Dorsolateral prefrontal cortex (tissue), 120 donors: ENCODE measurements at regions of chr14 and their contacts with region 1.

Region 1: DNA sequence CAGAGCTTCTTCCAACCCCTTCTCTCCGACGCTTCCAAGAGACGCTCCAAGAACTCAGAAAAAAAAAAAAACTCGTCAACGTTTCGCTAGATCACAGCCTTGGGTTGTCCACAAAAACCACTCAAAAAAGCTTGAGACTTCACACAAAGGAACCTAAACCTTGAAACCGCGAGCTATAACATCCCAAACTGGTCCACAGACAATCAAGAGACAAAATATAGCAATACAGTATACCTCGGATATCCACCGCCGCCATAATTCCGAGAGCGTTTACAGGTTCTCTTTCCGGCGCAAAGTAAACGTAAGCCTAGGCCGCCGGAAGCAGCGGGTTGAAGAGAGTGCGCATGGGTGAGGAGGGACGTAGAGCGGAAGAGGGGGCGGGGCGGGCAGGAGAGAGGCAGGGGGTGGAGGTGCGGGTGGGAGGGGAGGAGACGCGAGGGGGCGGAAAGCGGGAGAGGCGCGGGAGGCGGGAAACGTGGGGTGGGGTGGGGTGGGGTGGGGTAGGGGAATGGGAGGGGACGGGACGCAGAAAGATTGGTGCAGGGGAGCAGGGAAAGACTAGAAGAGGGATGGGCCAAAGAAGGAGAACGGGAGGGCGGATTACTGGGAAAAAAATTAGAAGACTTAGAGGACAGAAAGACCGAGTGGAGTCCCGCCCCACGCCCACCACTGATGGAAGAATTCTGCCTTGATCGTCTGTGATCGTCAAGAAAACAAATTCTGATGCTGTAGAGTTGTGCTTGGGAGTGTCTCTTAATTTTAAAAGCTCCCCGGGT is at the start of gene MED6:
- DNase-seq: peak; percentile 85 to 93 (median 88)
- H3K4me3 ChIP-seq: peak within 1 kb of the TSS; percentile 60 to 100 (median 93)
- H3K27ac ChIP-seq: peak within 1 kb of the TSS in 27 of 59 donors; percentile 25 to 79 (median 48)
- H3K27me3 ChIP-seq: peaks cover 0 to 17% (median 0%) of the 10 kb centered on the region in 45 donors
- CTCF ChIP-seq: peak in 1 of 56 donors; percentile 8
- total RNA-seq, gene MED6: 41.4 to 79.3 (median 65.8) TPM

Region 2: DNA sequence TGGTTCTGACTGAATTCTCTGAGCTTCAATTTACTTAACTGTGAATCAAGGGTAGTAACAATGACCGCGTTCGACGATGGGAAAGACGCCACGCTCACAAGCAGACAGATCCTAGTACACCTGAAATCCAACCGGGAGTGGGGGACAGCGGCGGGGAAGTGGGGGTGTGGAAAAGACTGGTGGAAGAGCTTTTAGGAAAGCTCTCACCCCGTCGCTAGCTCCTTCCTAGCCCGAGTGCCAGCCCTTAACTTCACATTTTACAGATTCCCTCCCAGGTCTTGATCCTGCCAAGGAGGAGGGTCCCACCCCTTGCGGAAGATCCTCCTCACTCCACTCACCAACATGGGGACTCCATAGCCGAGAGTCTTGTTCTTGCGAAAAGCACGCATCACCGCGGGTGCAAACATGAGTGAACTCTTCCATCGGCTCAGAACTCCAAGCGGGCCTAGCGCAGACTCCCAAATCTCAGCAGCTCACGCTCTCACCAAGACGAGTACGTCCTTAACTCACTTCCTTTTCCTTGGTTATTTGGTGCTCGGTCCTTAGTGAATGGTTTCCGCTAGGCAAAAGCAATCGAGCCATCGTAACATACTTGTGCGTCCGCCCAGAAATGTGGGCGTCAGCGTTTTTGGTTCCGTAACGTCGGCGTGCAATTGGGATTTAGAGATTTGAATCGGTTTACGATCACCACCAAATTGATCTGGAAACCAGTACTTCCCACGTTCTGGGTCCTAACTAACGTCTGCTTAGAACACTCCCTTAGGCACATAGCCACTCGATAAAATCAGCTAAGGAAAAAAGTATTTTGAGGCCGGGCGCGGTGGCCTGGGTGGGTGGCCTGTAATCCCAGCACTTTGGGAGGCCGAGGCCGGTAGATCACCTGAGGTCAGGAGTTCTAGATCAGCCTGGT is 241.1 kb before region 1 on chr14 and contains the start of gene COX16:
- intact Hi-C with region 1: loop called in 1 of 2 experiments (anchors 5 kb)
- DNase-seq: peak; percentile 61 to 93 (median 84)
- H3K4me3 ChIP-seq: peak within 1 kb of the TSS; percentile 54 to 95 (median 84)
- H3K27ac ChIP-seq: peak within 1 kb of the TSS in 58 of 59 donors; percentile 18 to 92 (median 76)
- H3K27me3 ChIP-seq: no peaks in the 10 kb centered on the region
- CTCF ChIP-seq: peak in 39 of 56 donors; percentile 8 to 64 (median 34)
- total RNA-seq, gene COX16: 14.0 to 48.3 (median 28.0) TPM

Region 3: GRCh38 chr14:70809543-70810244 is 209.1 kb after region 1 on chr14:
- intact Hi-C with region 1: loop called in 1 of 2 experiments (anchors 2 kb)
- DNase-seq: peak; percentile 63 to 98 (median 92)
- H3K4me3 ChIP-seq: peak overlapping the region; percentile 33 to 88 (median 73)
- H3K27ac ChIP-seq: peak overlapping the region in 28 of 59 donors; percentile 4 to 81 (median 44)
- H3K27me3 ChIP-seq: peaks cover 0 to 45% (median 0%) of the 10 kb centered on the region in 45 donors
- CTCF ChIP-seq: no peak